Panc1 (cell line): ENCODE measurements at regions of chr14 and their contacts with region 1.

Region 1: GRCh38 chr14:102304611-102305509 is at the start of gene MOK:
- DNase-seq: peak; percentile 86
- ATAC-seq: peak; percentile 98
- H3K4me3 ChIP-seq: peak within 1 kb of the TSS; percentile 70 to 82
- H3K27ac ChIP-seq: peak within 1 kb of the TSS; percentile 74
- H3K4me1 ChIP-seq: peaks cover 3% of the 10 kb centered on the region; the same call in 1 of the 2 replicates
- H3K27me3 ChIP-seq: no peaks in the 10 kb centered on the region
- CTCF ChIP-seq: no peak
- total RNA-seq, gene MOK: 9.8 TPM

Region 2: GRCh38 chr14:102235275-102235897 is 69.5 kb before region 1 on chr14:
- CTCF ChIA-PET with region 1: no interaction called
- POLR2A ChIA-PET with region 1: interaction called, 11 read pairs
- in situ Hi-C with region 1: no loop called
- intact Hi-C with region 1: no loop called
- DNase-seq: peak; percentile 32
- ATAC-seq: peak; percentile 94
- H3K4me3 ChIP-seq: no peak overlapping the region
- H3K27ac ChIP-seq: no peak overlapping the region
- H3K4me1 ChIP-seq: no peaks in the 10 kb centered on the region; the same call in none of the 2 replicates
- H3K27me3 ChIP-seq: no peaks in the 10 kb centered on the region
- CTCF ChIP-seq: peak; percentile 87